Activated naive CD8-positive, alpha-beta T cell treated with anti-CD3 and anti-CD28 coated beads, Interleukin-2, amount 10 ng/mL, durations not matched to agents 7 days and 5 days (primary cell): ENCODE measurements at regions of chr12 and their contacts with region 1.

Region 1: GRCh38 chr12:6443361-6443983 is 1.3 kb upstream of the CD27 start:
- DNase-seq: no peak
- ATAC-seq: peak; percentile 12
- H3K4me3 Mint-ChIP-seq: peak overlapping the region; percentile 94
- H3K27ac Mint-ChIP-seq: peak overlapping the region; percentile 94
- H3K4me1 Mint-ChIP-seq: peaks cover 54% of the 10 kb centered on the region
- H3K27me3 Mint-ChIP-seq: no peaks in the 10 kb centered on the region

Region 2: DNA sequence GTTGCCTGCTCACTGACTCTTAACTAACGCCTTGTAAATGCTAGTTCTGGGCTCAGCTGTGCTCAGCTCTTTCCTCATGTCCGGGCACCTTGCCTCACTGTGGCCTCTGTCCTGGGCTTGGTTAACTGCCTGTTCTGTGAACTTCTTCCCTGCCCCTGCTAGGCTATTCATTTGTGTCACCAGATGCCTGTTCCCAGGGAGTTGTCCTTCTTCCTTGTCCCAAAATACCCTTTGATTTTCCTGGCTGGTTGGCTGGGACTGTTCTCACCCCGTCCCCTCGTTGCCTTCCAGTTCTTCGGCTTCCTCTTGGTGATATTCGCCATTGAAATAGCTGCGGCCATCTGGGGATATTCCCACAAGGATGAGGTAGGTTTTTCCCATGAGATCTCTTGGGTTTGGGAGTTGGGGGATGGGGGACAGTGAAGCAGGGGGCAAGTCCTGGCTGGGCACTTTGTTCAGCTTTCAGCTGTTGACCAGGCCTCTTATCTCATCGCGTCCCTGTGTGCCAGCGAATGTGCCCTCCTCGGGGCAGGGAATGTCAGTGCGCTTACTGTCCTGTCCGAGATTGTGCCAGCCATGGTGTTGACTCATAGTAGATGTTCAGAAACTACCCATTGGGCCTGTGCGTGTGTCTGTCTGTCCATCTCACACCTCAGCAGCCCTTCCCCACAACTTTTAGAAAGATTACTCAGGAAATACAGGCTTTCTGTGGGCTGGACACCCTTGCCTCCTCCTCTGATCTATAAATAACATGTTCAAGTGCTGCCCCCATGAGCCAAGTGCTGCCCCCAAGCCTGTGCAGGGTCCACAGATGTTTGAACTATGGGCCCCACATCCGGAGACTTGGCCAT is 210.1 kb before region 1 on chr12:
- POLR2A ChIA-PET with region 1: no interaction called
- DNase-seq: no peak
- ATAC-seq: no peak
- H3K4me3 Mint-ChIP-seq: no peak overlapping the region
- H3K27ac Mint-ChIP-seq: peak overlapping the region; percentile 2
- H3K4me1 Mint-ChIP-seq: peaks cover 28% of the 10 kb centered on the region
- H3K27me3 Mint-ChIP-seq: peaks cover 5% of the 10 kb centered on the region

Region 3: DNA sequence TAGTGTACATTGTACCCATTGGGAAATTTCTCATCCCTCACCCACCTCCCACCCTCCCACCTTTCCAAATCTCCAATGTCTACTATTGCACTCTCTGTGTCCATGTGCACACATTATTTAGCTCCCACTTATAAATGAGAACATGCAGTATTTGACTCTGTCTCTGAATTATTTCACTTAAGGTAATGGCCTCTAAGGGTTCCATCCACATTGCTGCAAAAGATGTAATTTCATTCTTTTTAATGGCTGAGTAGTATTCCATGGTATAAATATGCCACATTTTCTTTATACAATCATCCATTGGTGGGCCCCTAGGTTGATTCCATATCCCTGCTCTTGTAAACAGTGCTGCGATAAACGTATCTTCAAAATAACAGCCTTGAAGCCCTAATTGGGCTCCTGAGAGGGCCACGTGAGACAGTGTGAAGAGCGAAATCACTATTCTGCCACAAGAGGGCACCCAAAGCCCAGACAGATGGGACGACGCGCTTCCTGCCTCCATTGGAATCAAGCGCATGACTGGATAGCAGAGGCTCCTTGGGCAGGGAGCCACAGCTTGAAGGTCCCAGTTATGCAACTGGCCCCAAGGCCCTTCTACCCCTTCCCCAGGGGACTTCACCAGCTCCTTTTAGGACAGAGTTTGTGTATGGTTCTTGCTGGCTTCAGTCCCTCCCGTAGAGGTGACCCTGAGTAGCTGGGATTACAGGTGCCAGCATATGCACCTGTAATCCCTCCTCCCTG is 20.0 kb before region 1 on chr12:
- POLR2A ChIA-PET with region 1: interaction called, 20 read pairs
- DNase-seq: peak; percentile 69
- ATAC-seq: peak; percentile 81
- H3K4me3 Mint-ChIP-seq: no peak overlapping the region
- H3K27ac Mint-ChIP-seq: peak overlapping the region; percentile 76
- H3K4me1 Mint-ChIP-seq: peaks cover 45% of the 10 kb centered on the region
- H3K27me3 Mint-ChIP-seq: peaks cover 7% of the 10 kb centered on the region